ENCODE measurements at regions of chr22 and their contacts with region 1.

Region 1: GRCh38 chr22:37328017-37328416 is 45.7 kb downstream of the CYTH4 start:
- DNase-seq: peak; percentile 33
- H3K4me3 ChIP-seq: no peak overlapping the region
- CTCF ChIP-seq: no peak

Region 2: DNA sequence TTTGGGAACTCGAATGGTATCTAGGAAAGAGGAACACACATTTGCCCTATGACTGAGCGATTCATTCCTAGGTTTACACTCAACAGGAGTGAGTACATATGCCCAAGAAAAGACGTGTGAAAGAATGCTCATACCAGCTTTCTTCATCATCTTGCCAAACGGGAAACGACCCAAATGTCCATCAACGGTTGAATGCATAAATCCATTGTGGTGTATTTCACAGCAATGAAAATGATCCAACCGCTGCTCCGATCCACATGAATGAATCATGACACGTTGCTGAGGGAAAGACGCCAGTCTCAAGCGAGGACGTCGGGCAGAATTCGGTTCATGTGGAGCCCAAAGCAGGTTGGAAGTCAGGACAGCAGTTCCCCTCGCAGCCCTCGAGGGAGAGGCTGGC is 25.8 kb after region 1 on chr22:
- in situ Hi-C with region 1: no loop called
- DNase-seq: peak; percentile 74
- H3K4me3 ChIP-seq: no peak overlapping the region
- CTCF ChIP-seq: no peak

Region 3: GRCh38 chr22:37401401-37402183 is 73.6 kb after region 1 on chr22:
- in situ Hi-C with region 1: loop called (anchors 5 kb)
- DNase-seq: peak; percentile 83
- H3K4me3 ChIP-seq: no peak overlapping the region
- CTCF ChIP-seq: no peak

Region 4: DNA sequence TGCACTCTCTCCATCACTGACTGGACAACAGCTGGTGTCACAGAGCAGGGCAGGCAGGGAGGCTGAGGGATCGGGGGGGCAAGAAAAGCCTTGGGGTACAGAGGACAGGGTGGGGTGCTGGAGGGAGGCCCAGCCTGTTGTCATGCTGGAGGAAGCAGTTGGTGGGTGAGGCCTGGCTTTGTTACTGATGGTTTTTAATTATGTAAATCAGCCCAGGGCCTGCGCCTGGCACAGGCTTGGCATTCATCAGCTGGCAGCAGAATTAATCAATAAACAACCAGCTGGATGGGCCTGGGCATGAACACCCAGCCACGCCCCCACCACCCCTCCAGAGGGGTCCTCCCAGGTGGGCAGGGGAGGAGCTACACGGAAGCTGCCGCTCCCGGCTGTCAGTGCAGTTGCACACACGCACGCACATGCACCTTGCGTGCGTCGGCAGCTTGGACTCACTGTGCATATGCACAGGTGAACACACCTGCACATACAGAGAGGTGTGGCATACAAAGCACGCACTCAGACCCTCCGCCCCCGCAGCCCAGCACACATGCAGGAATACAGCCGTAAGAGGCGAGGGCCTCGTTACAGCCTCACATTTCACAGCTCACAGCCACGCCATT is 120.6 kb after region 1 on chr22:
- in situ Hi-C with region 1: loop called (anchors 5 kb)
- DNase-seq: no peak
- H3K4me3 ChIP-seq: no peak overlapping the region
- CTCF ChIP-seq: no peak

Region 5: DNA sequence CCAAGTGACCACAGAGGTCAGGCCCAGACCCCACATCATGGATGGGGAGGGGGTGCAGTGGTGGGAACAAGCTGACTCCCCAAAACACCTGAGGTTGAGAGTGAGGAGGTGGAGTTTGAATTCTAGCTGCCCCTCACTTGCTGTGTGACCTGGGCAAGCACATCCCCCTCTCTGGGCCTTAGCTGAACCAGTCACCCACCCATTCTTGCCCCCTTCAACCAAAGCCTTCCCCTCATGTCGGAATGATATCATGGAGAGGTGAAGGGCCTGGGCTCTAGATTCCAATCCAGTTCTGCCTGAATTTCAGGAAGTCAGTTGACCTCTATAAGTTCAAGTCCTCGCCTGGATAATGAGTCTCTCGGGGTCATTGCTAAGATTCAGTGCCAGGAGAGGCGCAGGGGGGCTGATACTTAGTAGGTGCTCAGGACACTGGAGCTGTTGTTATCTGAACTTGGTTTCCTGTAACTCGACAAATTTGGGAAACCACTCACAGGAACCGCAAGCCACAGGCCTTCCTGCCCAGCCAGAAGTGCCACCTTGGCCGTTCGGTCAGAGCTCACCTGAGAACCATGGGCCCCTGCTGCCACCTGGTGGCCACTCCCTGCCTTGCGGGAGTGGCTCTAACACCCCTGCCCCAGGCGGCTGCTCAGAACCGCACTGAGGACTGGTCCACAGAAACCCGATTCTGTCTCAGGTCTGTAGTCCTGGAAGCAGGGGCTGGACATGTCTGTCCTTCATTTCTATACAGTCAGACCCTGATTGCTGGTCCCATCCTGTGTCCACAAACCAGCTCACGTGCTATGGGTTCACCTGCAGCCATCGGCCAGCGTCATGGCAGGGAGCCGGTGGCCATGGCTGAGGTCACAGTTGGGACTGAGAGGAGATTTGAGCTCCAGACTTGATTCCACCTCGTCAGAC is 239.1 kb after region 1 on chr22:
- in situ Hi-C with region 1: loop called (anchors 10 kb)
- DNase-seq: peak; percentile 63
- H3K4me3 ChIP-seq: no peak overlapping the region
- CTCF ChIP-seq: peak; percentile 92

Measured in astrocyte of the cerebellum (primary cell).